Activated CD4-positive, alpha-beta T cell treated with anti-CD3 and anti-CD28 coated beads, Interleukin-2, amount 10 ng/mL, durations not matched to agents 24 days and 14 days (primary cell): ENCODE measurements at regions of chr17 and their contacts with region 1.

Region 1: GRCh38 chr17:7045909-7046724 is 2.2 kb upstream of the SLC16A11 start:
- DNase-seq: peak; percentile 87
- H3K4me3 Mint-ChIP-seq: peak overlapping the region; percentile 73
- H3K27ac Mint-ChIP-seq: peak overlapping the region; percentile 60
- H3K4me1 Mint-ChIP-seq: peaks cover 20% of the 10 kb centered on the region
- H3K27me3 Mint-ChIP-seq: peaks cover 15% of the 10 kb centered on the region

Region 2: GRCh38 chr17:7177196-7177953 is 131.3 kb after region 1 on chr17:
- intact Hi-C with region 1: loop called (anchors 2 kb)
- DNase-seq: peak; percentile 91
- H3K4me3 Mint-ChIP-seq: peak overlapping the region; percentile 77
- H3K27ac Mint-ChIP-seq: peak overlapping the region; percentile 50
- H3K4me1 Mint-ChIP-seq: peaks cover 10% of the 10 kb centered on the region
- H3K27me3 Mint-ChIP-seq: peaks cover 14% of the 10 kb centered on the region